Caco-2 (cell line): ENCODE measurements at regions of chr12 and their contacts with region 1.

Region 1: DNA sequence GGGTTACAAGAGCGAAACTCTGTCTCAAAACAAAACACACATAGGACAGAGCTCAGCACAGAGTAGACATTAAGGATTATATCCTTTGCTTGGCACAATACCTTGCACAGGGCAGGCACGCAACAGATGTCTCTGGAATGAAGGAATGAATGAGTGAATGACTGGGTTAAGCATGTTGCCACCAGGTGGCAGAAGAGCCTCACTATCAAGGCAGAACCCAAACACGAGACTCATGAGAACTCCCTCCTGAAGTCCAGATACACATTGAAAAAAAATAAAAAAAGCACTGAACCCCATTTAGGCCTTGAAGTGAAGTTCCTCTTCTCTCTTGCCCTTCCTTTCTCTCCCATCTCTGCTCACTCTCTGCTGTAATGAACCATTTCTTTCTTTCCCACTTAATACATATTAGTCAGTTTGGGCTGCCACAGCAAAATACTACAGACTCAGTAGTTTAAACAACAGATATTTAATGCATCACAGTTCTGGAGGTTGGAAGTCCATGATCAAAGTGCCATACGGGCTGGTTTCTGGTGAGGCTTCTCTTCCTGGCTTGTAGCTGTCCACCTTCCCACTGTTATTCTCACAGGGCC is 26.6 kb upstream of the LTA4H start:
- DNase-seq: peak; percentile 74 to 76
- H3K4me3 ChIP-seq: no peak overlapping the region
- H3K4me3 Mint-ChIP-seq: no peak overlapping the region
- H3K27ac Mint-ChIP-seq: no peak overlapping the region
- H3K4me1 ChIP-seq: no peaks in the 10 kb centered on the region
- H3K4me1 Mint-ChIP-seq: no peaks in the 10 kb centered on the region
- H3K27me3 ChIP-seq: no peaks in the 10 kb centered on the region
- H3K27me3 Mint-ChIP-seq: no peaks in the 10 kb centered on the region
- CTCF ChIP-seq: peak; percentile 78 to 85

Region 2: DNA sequence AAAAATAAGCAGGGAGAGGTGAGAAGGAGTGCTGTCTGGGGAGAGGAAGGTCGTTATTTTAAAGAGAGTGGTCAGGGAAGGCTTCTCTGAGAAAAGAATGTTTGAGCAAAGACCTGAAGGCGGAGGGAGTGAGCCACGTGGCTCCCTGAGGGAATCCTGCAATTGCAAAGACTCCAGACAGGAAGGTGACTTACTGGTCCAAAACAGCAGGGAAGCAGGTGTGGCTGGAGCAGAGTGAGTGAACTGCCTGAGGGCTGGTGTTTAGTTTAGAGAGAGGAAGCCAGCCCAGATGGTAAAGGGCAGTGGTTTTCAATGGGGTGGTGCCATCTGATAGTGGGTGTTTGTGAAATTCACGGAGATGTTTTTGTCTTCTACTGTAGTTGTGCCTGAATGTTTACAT is 32.2 kb after region 1 on chr12:
- CTCF ChIA-PET with region 1: no interaction called
- POLR2A ChIA-PET with region 1: no interaction called
- intact Hi-C with region 1: loop called (anchors 2 kb)
- DNase-seq: peak; percentile 28 to 53
- H3K4me3 ChIP-seq: no peak overlapping the region
- H3K4me3 Mint-ChIP-seq: no peak overlapping the region
- H3K27ac Mint-ChIP-seq: peak overlapping the region; percentile 7
- H3K4me1 ChIP-seq: no peaks in the 10 kb centered on the region
- H3K4me1 Mint-ChIP-seq: peaks cover 12% of the 10 kb centered on the region
- H3K27me3 ChIP-seq: no peaks in the 10 kb centered on the region
- H3K27me3 Mint-ChIP-seq: peaks cover 2% of the 10 kb centered on the region
- CTCF ChIP-seq: no peak

Region 3: GRCh38 chr12:96177013-96177412 is 115.1 kb after region 1 on chr12:
- CTCF ChIA-PET with region 1: no interaction called
- POLR2A ChIA-PET with region 1: no interaction called
- intact Hi-C with region 1: no loop called
- DNase-seq: no peak
- H3K4me3 ChIP-seq: no peak overlapping the region
- H3K4me3 Mint-ChIP-seq: no peak overlapping the region
- H3K27ac Mint-ChIP-seq: no peak overlapping the region
- H3K4me1 ChIP-seq: no peaks in the 10 kb centered on the region
- H3K4me1 Mint-ChIP-seq: no peaks in the 10 kb centered on the region
- H3K27me3 ChIP-seq: no peaks in the 10 kb centered on the region
- H3K27me3 Mint-ChIP-seq: peaks cover 11% of the 10 kb centered on the region
- CTCF ChIP-seq: no peak

Region 4: GRCh38 chr12:96399919-96400797 is 338.2 kb after region 1 on chr12 and contains the start of gene CDK17:
- CTCF ChIA-PET with region 1: no interaction called
- POLR2A ChIA-PET with region 1: no interaction called
- intact Hi-C with region 1: loop called (anchors 1 kb)
- DNase-seq: peak; percentile 80 to 83
- H3K4me3 ChIP-seq: peak within 1 kb of the TSS; percentile 69
- H3K4me3 Mint-ChIP-seq: peak within 1 kb of the TSS; percentile 96
- H3K27ac Mint-ChIP-seq: peak within 1 kb of the TSS; percentile 84
- H3K4me1 ChIP-seq: 0 out of 2 replicates have a peak, but pooled peaks cover 9% of the 10 kb centered on the region
- H3K4me1 Mint-ChIP-seq: peaks cover 18% of the 10 kb centered on the region
- H3K27me3 ChIP-seq: no peaks in the 10 kb centered on the region
- H3K27me3 Mint-ChIP-seq: no peaks in the 10 kb centered on the region
- CTCF ChIP-seq: peak in 1 of 2 experiments; percentile 37
- total RNA-seq, gene CDK17: 11.5 and 11.7 TPM in 2 replicates